ENCODE measurements at regions of chr18 and their contacts with region 1.

Region 1: GRCh38 chr18:34661464-34662111 is 48.5 kb upstream of the DTNA start:
- DNase-seq: peak; percentile 67
- H3K4me3 Mint-ChIP-seq: no peak overlapping the region
- H3K27ac Mint-ChIP-seq: no peak overlapping the region
- H3K4me1 Mint-ChIP-seq: peaks cover 16% of the 10 kb centered on the region
- H3K27me3 Mint-ChIP-seq: no peaks in the 10 kb centered on the region
- CTCF ChIP-seq: peak; percentile 59

Region 2: GRCh38 chr18:34122724-34123334 is 538.8 kb before region 1 on chr18:
- CTCF ChIA-PET with region 1: interaction called, 39 read pairs
- POLR2A ChIA-PET with region 1: no interaction called
- intact Hi-C with region 1: loop called (anchors 5 kb)
- DNase-seq: peak; percentile 63
- H3K4me3 Mint-ChIP-seq: no peak overlapping the region
- H3K27ac Mint-ChIP-seq: no peak overlapping the region
- H3K4me1 Mint-ChIP-seq: peaks cover 5% of the 10 kb centered on the region
- H3K27me3 Mint-ChIP-seq: no peaks in the 10 kb centered on the region
- CTCF ChIP-seq: peak; percentile 76

Region 3: DNA sequence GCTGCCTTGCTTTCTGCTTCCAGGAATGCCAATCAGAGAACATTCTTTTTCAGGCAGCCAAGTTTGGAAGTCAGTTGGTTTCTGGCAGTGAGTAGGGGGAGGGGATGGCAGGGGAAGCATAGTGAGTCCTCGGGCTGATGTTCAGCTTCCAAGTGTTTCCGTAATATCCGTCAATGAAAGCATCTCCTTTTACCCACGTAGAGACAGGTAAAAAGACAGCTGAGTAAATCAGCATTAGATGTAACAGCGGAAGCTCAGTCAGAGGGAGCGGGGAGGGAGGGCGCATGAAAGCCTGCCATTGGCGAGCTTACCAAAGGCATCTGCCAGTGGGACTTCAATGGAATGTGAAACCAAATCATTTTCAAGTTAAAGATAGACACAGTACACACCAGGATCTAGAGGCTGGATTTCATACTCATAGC is 68.6 kb before region 1 on chr18:
- CTCF ChIA-PET with region 1: interaction called, 22 read pairs
- POLR2A ChIA-PET with region 1: no interaction called
- intact Hi-C with region 1: loop called (anchors 5 kb)
- DNase-seq: peak; percentile 9
- H3K4me3 Mint-ChIP-seq: peak overlapping the region; percentile 35
- H3K27ac Mint-ChIP-seq: no peak overlapping the region
- H3K4me1 Mint-ChIP-seq: no peaks in the 10 kb centered on the region
- H3K27me3 Mint-ChIP-seq: peaks cover 46% of the 10 kb centered on the region
- CTCF ChIP-seq: no peak

Region 4: GRCh38 chr18:34676816-34677574 is 15.4 kb after region 1 on chr18:
- CTCF ChIA-PET with region 1: interaction called, 61 read pairs
- POLR2A ChIA-PET with region 1: interaction called, 3 read pairs
- intact Hi-C with region 1: no loop called
- DNase-seq: no peak
- H3K4me3 Mint-ChIP-seq: no peak overlapping the region
- H3K27ac Mint-ChIP-seq: no peak overlapping the region
- H3K4me1 Mint-ChIP-seq: no peaks in the 10 kb centered on the region
- H3K27me3 Mint-ChIP-seq: no peaks in the 10 kb centered on the region
- CTCF ChIP-seq: no peak

Region 5: DNA sequence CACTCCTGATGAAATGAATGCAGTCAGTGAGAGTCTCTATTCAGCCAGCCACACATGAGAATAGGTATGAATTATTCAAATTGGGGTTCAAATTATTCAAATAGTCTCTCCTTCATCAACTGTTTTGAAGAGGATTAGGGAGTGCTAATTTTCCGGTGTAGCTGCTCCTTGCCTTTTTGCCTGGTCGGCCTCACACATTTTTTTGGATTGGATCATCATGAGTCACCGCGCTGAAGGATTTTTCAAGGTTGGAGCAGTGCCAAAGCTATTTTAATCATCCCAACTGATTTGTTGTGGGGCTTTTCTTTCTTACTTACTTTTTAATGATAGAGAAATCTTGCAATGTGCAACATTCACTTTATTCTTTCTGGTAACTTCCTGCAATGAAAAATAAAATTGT is 46.1 kb after region 1 on chr18:
- CTCF ChIA-PET with region 1: interaction called, 62 read pairs
- POLR2A ChIA-PET with region 1: interaction called, 32 read pairs
- intact Hi-C with region 1: loop called (anchors 5 kb)
- DNase-seq: peak; percentile 95
- H3K4me3 Mint-ChIP-seq: no peak overlapping the region
- H3K27ac Mint-ChIP-seq: peak overlapping the region; percentile 29
- H3K4me1 Mint-ChIP-seq: peaks cover 19% of the 10 kb centered on the region
- H3K27me3 Mint-ChIP-seq: no peaks in the 10 kb centered on the region
- CTCF ChIP-seq: no peak

Region 6: GRCh38 chr18:34729264-34729663 is 67.7 kb after region 1 on chr18:
- CTCF ChIA-PET with region 1: interaction called, 44 read pairs
- POLR2A ChIA-PET with region 1: no interaction called
- intact Hi-C with region 1: no loop called
- DNase-seq: peak; percentile 57
- H3K4me3 Mint-ChIP-seq: no peak overlapping the region
- H3K27ac Mint-ChIP-seq: no peak overlapping the region
- H3K4me1 Mint-ChIP-seq: peaks cover 7% of the 10 kb centered on the region
- H3K27me3 Mint-ChIP-seq: no peaks in the 10 kb centered on the region
- CTCF ChIP-seq: peak; percentile 64

Region 7: DNA sequence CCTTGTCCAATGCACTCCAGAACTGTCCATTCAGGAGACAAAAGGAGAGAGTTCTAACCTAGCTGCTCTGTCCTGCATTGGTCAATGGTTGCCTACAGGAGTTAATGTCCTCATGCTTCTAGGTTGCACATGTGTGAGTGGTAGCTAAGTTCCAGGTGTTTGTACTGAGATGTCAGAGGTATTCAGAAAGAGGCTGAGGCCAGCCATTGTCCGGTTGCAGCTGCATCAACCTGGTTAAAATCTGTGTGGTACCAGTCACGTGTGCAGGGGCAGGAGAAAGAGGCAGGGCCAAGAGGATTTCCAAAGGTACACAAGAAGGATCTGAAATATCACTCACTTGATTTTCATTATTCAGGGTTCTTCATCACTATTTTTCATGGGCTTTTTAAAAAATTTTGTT is 119.3 kb after region 1 on chr18:
- CTCF ChIA-PET with region 1: interaction called, 148 read pairs
- POLR2A ChIA-PET with region 1: interaction called, 3 read pairs
- intact Hi-C with region 1: no loop called
- DNase-seq: no peak
- H3K4me3 Mint-ChIP-seq: no peak overlapping the region
- H3K27ac Mint-ChIP-seq: no peak overlapping the region
- H3K4me1 Mint-ChIP-seq: no peaks in the 10 kb centered on the region
- H3K27me3 Mint-ChIP-seq: no peaks in the 10 kb centered on the region
- CTCF ChIP-seq: no peak

Region 8: GRCh38 chr18:34828104-34828503 is 166.5 kb after region 1 on chr18:
- CTCF ChIA-PET with region 1: no interaction called
- POLR2A ChIA-PET with region 1: no interaction called
- intact Hi-C with region 1: no loop called
- DNase-seq: no peak
- H3K4me3 Mint-ChIP-seq: no peak overlapping the region
- H3K27ac Mint-ChIP-seq: no peak overlapping the region
- H3K4me1 Mint-ChIP-seq: no peaks in the 10 kb centered on the region
- H3K27me3 Mint-ChIP-seq: no peaks in the 10 kb centered on the region
- CTCF ChIP-seq: no peak

Measured in MCF 10A (cell line).